ENCODE measurements at regions of chr17 and their contacts with region 1.

Region 1: GRCh38 chr17:50626037-50626574 is 8.6 kb upstream of the ABCC3 start:
- DNase-seq: peak; percentile 81
- ATAC-seq: peak; percentile 77 to 86

Region 2: DNA sequence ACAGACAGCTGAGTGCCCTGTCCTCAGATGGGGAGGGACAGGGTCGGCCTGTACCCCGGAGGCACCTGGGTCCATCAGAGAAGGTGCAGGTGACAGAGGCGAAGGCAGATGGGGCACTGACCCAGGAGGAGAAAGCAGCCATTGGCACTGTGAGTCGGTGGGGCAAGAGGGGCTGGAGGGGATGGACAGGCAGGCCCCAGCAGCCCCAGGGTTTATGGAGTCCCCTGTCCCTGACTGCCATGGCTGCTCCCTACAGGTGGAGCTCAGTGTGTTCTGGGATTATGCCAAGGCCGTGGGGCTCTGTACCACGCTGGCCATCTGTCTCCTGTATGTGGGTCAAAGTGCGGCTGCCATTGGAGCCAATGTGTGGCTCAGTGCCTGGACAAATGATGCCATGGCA is 49.5 kb after region 1 on chr17:
- intact Hi-C with region 1: loop called in 1 of 2 experiments (anchors 5 kb)
- DNase-seq: peak; percentile 18
- ATAC-seq: no peak

Region 3: GRCh38 chr17:50697663-50698274 is 71.7 kb after region 1 on chr17:
- intact Hi-C with region 1: loop called in 1 of 2 experiments (anchors 5 kb)
- DNase-seq: no peak
- ATAC-seq: no peak

Measured in left cardiac atrium (tissue), 4 donors.